Pancreas (tissue), 10 donors: ENCODE measurements at regions of chr9 and their contacts with region 1.

Region 1: GRCh38 chr9:109903515-109904138 is 123.6 kb downstream of the PALM2AKAP2 start:
- DNase-seq: peak in 3 of 6 donors; percentile 32 to 68 (median 46)
- ATAC-seq: peak; percentile 67 to 92 (median 88)
- H3K4me3 ChIP-seq: no peak overlapping the region
- H3K27ac ChIP-seq: no peak overlapping the region
- H3K4me1 ChIP-seq: no peaks in the 10 kb centered on the region
- H3K27me3 ChIP-seq: no peaks in the 10 kb centered on the region
- CTCF ChIP-seq: peak; percentile 10 to 67 (median 52)

Region 2: DNA sequence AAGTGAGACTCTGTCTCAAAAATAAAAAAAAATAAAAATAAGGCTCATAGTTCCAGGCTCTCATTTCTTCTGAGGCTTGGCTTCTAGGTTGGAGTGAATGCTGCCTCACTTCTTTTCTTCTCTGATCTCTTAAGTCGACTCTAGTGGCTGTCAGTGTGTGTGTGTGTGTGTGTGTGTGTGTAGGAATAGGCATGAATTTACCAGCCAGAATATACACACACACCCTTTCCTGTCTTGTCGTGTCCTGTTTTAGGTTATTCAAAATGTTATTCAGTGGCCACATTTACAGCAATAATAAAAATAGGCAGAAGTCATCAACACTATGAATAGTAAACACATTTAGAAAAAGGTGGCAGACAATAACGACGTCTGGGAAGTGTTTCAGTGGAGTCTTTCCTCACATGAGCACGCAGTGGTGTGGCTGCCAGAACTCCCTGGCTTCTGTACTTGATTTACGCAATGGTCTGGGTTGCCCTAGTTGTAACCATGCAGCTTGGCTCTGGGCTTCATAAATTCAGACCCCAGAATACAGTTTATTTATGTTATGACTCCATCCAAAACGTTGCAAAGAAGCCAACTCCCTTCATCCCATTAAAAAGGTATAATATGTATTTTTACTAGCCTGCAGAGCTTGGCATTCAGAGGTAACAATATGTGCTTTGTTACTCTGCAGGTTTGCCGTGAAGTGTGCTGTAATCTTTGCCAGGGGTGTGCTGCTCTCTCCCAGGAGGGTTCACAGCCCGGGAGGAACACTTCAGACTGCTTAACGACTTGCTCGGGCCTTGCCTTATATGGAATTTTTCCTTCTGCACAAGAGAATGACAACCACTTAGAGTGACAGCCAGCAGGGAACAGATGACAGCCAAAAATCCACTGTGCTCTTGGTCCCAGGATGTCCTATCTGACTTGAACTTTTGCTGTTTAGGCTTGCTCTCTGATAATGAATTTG is 158.0 kb before region 1 on chr9:
- intact Hi-C with region 1: no loop called
- DNase-seq: no peak
- ATAC-seq: peak in 3 of 4 donors; percentile 38 to 54 (median 42)
- H3K4me3 ChIP-seq: no peak overlapping the region
- H3K27ac ChIP-seq: no peak overlapping the region
- H3K4me1 ChIP-seq: no peaks in the 10 kb centered on the region
- H3K27me3 ChIP-seq: no peaks in the 10 kb centered on the region
- CTCF ChIP-seq: no peak

Region 3: DNA sequence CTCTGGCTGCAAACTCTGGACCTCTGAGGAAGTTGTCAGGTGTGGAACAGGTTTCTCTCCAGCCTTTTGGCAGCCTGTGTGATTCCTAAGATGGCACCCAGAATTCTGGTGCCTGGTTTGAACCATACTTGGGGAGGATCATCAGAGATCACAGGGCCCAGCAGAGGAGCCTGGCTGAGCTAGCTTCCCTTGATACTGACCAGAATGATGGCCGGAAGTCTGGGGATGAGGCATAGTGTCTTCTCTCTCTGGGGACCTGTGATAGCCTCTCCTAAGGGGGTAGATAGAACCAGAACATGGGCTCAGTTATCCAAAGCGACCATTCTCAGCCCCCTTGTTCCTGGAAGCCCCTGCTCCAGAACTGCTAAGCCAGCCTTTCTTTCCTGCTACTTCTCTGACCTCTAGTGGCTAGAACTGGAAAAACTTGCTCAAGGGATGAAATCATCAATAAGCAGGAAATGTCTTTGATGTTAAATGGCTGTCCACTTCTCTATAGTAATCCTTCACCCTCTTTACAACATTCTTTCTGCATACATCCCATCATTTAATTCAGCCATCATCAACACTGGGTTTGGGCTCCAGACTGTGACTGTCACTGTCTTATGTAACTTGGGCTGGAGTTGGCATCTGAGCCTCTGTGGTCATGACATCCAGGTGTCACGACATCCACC is 249.2 kb after region 1 on chr9:
- intact Hi-C with region 1: loop called in 2 of 3 experiments (anchors 5 kb)
- DNase-seq: no peak
- ATAC-seq: peak; percentile 55 to 78 (median 68)
- H3K4me3 ChIP-seq: no peak overlapping the region
- H3K27ac ChIP-seq: no peak overlapping the region
- H3K4me1 ChIP-seq: no peaks in the 10 kb centered on the region
- H3K27me3 ChIP-seq: no peaks in the 10 kb centered on the region
- CTCF ChIP-seq: peak; percentile 22 to 54 (median 48)

Region 4: GRCh38 chr9:110180511-110181434 is 277.1 kb after region 1 on chr9:
- intact Hi-C with region 1: no loop called
- DNase-seq: peak in 1 of 6 donors; percentile 40
- ATAC-seq: peak; percentile 7 to 35 (median 30)
- H3K4me3 ChIP-seq: no peak overlapping the region
- H3K27ac ChIP-seq: no peak overlapping the region
- H3K4me1 ChIP-seq: peaks cover 0 to 22% (median 18%) of the 10 kb centered on the region in 3 donors
- H3K27me3 ChIP-seq: no peaks in the 10 kb centered on the region
- CTCF ChIP-seq: no peak